ENCODE measurements at regions of chr11 and their contacts with region 1.

Region 1: GRCh38 chr11:69554894-69555293 is 73.4 kb downstream of the LINC01488 start:
- DNase-seq: no peak
- H3K4me3 Mint-ChIP-seq: no peak overlapping the region
- H3K27ac Mint-ChIP-seq: no peak overlapping the region
- H3K4me1 Mint-ChIP-seq: peaks cover 18% of the 10 kb centered on the region
- H3K27me3 Mint-ChIP-seq: peaks cover 6% of the 10 kb centered on the region

Region 2: DNA sequence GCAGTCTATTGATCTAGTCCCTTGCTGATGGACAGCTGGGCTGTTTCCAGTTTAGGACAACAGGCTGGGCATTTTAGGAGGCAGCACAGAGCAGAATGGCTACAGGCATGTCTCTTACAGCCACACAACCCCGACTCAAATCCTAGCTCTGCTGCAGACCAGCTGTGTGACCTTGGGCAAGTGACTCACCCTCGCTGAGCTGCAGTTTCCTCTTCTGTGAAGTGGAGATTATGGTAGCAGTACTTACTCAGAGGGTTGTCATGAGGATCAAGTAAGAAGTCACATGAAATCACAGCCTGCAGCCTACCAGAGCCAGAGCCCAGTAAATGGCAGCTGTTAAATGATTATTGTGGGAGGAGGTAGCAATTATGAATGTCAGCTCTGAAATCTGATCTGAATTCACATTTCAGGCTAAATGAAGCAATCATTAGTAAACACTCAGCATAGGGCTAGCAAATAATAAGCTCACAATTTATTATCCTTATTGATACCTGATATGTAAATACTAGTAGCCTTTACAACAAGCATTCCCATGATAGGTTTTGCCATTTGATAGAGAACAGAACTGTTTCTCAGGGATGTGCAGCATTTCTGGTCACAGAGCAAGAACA is 202.1 kb before region 1 on chr11:
- intact Hi-C with region 1: loop called (anchors 5 kb)
- DNase-seq: no peak
- H3K4me3 Mint-ChIP-seq: no peak overlapping the region
- H3K27ac Mint-ChIP-seq: peak overlapping the region; percentile 43
- H3K4me1 Mint-ChIP-seq: peaks cover 10% of the 10 kb centered on the region
- H3K27me3 Mint-ChIP-seq: peaks cover 1% of the 10 kb centered on the region

Region 3: DNA sequence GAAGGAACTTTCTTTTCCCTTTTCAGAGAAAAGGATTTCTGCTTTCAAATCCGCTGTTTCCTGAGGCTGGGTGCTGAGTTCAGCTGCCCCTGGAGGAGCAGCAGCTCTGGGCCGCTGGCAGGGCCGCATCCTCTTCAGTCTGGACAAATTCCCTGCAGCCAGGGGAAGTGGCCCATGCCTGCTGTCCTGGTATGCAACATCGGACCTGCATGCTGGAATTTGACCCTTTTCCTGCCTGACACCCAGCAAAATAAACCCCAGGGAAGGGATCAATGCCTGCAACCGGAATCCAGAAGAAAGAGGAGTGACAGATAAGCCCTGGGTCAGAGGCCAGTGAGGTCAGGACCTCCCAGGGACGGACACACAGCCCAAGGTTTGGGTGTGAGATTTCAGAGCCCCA is 127.6 kb before region 1 on chr11:
- intact Hi-C with region 1: loop called (anchors 10 kb)
- DNase-seq: no peak
- H3K4me3 Mint-ChIP-seq: no peak overlapping the region
- H3K27ac Mint-ChIP-seq: no peak overlapping the region
- H3K4me1 Mint-ChIP-seq: peaks cover 10% of the 10 kb centered on the region
- H3K27me3 Mint-ChIP-seq: peaks cover 3% of the 10 kb centered on the region

Region 4: DNA sequence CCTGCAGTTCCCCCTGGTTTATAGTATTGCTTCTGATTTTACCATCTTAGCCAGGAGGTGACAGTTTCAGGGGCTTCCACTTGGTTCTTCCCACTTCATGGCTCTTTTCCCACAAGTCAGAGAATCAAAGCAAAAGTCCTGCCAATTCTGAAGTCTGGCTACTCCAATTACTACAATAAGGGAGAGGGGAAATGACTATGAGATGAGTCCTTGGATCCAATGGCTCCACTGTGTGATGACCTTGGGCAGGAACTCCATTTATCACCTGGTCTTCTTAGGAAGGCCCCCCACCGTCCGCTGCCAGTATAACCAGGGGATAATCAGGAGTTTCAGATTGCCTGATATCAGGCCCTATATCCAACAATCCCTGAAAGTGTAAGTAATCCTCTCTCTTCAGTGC is 54.5 kb after region 1 on chr11:
- intact Hi-C with region 1: no loop called
- DNase-seq: no peak
- H3K4me3 Mint-ChIP-seq: no peak overlapping the region
- H3K27ac Mint-ChIP-seq: no peak overlapping the region
- H3K4me1 Mint-ChIP-seq: no peaks in the 10 kb centered on the region
- H3K27me3 Mint-ChIP-seq: peaks cover 1% of the 10 kb centered on the region